PC-3 (cell line): ENCODE measurements at regions of chr3 and their contacts with region 1.

Region 1: DNA sequence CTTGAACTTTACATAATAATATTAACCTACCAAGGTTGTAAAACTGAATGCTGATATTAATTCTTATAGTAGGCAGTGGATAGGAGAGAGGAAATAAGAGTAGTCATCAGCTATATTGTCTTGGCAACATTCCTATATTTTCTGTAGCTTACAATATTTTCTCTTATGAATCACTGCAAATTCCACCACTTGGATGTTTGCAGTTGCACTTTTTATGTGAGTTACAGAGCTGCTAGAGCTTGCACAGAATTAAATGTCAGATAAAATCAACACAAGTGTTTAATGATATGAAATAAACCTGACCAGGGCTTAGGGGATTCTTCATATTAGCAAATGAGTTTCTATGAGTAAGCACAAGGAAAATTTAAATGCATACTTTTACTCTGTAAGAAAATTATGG is 1710.1 kb downstream of the SI start:
- DNase-seq: peak; percentile 90
- ATAC-seq: peak; percentile 98
- H3K4me3 ChIP-seq: no peak overlapping the region
- H3K27ac ChIP-seq: peak overlapping the region; percentile 57
- H3K4me1 ChIP-seq: peaks cover 14% of the 10 kb centered on the region
- H3K27me3 ChIP-seq: no peaks in the 10 kb centered on the region
- CTCF ChIP-seq: no peak

Region 2: DNA sequence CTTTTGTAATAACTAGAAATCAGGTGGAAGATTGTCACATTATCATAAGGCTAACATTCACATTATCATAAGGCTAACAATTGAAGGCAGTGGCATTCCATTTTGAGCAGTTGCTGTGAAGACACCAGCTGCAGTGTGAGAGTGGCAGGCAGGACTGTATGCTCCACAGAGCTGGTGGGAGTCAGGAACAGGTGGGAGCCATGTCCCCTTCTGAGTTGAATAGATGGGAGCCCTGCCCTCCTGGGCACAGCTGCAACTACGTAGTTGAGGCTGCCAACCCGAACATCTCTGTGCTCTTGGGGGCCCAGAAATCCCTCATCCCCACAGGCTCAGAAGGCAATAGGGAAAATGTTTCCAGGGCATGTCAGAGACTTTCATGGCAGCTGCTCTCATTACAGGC is 82.5 kb after region 1 on chr3:
- CTCF ChIA-PET with region 1: no interaction called
- POLR2A ChIA-PET with region 1: no interaction called
- intact Hi-C with region 1: loop called (anchors 1 kb)
- DNase-seq: no peak
- ATAC-seq: no peak
- H3K4me3 ChIP-seq: no peak overlapping the region
- H3K27ac ChIP-seq: no peak overlapping the region
- H3K4me1 ChIP-seq: no peaks in the 10 kb centered on the region
- H3K27me3 ChIP-seq: no peaks in the 10 kb centered on the region
- CTCF ChIP-seq: no peak

Region 3: GRCh38 chr3:163605915-163606314 is 237.7 kb after region 1 on chr3:
- CTCF ChIA-PET with region 1: no interaction called
- POLR2A ChIA-PET with region 1: no interaction called
- intact Hi-C with region 1: loop called (anchors 10 kb)
- DNase-seq: peak; percentile 92
- ATAC-seq: peak; percentile 96
- H3K4me3 ChIP-seq: no peak overlapping the region
- H3K27ac ChIP-seq: peak overlapping the region; percentile 43
- H3K4me1 ChIP-seq: peaks cover 24% of the 10 kb centered on the region
- H3K27me3 ChIP-seq: no peaks in the 10 kb centered on the region
- CTCF ChIP-seq: no peak